Aorta (tissue), 5 donors: ENCODE measurements at regions of chr11 and their contacts with region 1.

Region 1: GRCh38 chr11:109364851-109365250 is 57.1 kb upstream of the C11orf87 start:
- DNase-seq: no peak
- ATAC-seq: no peak
- H3K4me3 ChIP-seq: no peak overlapping the region
- H3K27ac ChIP-seq: no peak overlapping the region
- H3K4me1 ChIP-seq: no peaks in the 10 kb centered on the region
- H3K27me3 ChIP-seq: no peaks in the 10 kb centered on the region

Region 2: GRCh38 chr11:109317726-109318125 is 47.1 kb before region 1 on chr11:
- intact Hi-C with region 1: loop called in 1 of 2 experiments (anchors 5 kb)
- DNase-seq: no peak
- ATAC-seq: no peak
- H3K4me3 ChIP-seq: no peak overlapping the region
- H3K27ac ChIP-seq: no peak overlapping the region
- H3K4me1 ChIP-seq: no peaks in the 10 kb centered on the region
- H3K27me3 ChIP-seq: no peaks in the 10 kb centered on the region